MCF 10A (cell line): ENCODE measurements at regions of chr6 and their contacts with region 1.

Region 1: DNA sequence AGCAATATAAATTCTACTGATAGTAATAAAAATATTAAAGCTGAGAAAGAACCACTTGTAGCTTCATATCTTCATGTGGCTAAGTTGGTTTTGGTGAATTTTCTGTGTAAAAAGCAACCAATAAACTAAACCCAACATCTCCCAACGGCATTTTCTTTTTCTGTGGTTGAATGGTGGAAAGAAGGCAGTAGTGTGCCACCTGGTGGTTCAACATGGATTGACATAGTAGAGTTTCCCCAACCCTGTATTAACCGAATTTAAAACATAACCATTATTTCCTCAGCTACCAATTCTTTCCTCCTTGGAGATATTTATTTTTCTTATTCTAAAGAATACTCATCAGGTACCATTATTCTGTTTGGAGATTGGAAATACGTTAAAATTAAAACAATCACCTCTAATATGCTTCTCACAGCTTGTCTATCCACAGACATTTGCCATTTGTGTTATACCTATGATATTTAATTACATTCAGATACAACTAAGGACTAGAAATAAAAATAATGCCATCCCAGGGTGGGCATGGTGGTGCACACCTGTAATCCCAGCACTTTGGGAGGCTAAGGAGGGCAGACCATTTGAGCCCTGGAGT is 117.1 kb upstream of the EEF1E1 start:
- DNase-seq: peak; percentile 65
- H3K4me3 Mint-ChIP-seq: no peak overlapping the region
- H3K27ac Mint-ChIP-seq: no peak overlapping the region
- H3K4me1 Mint-ChIP-seq: no peaks in the 10 kb centered on the region
- H3K27me3 Mint-ChIP-seq: no peaks in the 10 kb centered on the region
- CTCF ChIP-seq: peak; percentile 72

Region 2: DNA sequence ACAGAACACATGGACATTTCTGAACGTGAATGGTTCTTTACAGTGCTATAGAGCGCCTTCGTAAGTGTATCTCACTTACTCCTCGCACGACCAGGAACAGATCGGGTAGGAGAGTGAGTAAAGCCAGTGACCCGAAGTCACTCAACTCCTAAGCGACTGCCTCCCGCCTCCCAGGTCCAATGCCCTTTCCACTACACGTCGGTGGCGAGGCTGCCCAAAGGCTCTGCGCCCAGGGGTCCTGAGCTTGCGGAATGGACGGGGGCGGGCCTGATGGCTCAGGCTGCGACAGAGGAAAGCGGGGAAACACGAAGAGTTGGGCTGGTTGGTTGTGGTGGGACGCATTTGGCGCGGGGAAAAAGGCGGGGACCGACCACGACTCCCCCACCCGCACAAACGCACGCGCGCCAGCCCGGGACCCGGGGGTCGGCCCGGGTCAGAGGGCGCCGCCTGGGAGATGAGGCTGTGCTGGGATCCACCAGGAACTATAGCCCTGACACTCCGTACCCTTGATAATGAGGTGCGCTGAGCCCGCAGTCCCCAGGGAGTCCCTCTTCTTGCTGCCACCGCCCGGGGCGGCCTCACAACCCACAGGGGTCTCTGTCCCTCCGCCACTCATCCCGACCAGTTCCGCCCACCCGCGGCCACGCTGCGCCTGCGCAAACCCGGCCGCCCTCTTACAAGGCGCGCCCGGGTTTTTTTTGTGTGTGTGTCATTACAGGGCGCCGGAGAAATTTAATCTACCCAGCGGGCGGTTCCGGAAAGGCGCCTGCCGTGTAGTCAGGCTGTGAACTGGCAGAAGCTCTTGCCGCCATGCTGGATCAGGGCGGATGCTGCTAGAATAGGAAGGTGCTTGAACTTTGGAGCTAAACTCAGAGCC is 155.4 kb before region 1 on chr6 and contains the start of gene BLOC1S5:
- CTCF ChIA-PET with region 1: interaction called, 4 read pairs
- POLR2A ChIA-PET with region 1: interaction called, 3 read pairs
- intact Hi-C with region 1: loop called (anchors 5 kb)
- DNase-seq: peak; percentile 96
- H3K4me3 Mint-ChIP-seq: peak within 1 kb of the TSS; percentile 86
- H3K27ac Mint-ChIP-seq: peak within 1 kb of the TSS; percentile 82
- H3K4me1 Mint-ChIP-seq: peaks cover 5% of the 10 kb centered on the region
- H3K27me3 Mint-ChIP-seq: no peaks in the 10 kb centered on the region
- CTCF ChIP-seq: no peak
- total RNA-seq, gene BLOC1S5: 7.7 and 10.9 TPM in 2 replicates

Region 3: GRCh38 chr6:8131256-8131897 is 88.1 kb before region 1 on chr6:
- CTCF ChIA-PET with region 1: interaction called, 321 read pairs
- POLR2A ChIA-PET with region 1: interaction called, 15 read pairs
- intact Hi-C with region 1: loop called (anchors 1 kb)
- DNase-seq: peak; percentile 82
- H3K4me3 Mint-ChIP-seq: no peak overlapping the region
- H3K27ac Mint-ChIP-seq: no peak overlapping the region
- H3K4me1 Mint-ChIP-seq: peaks cover 20% of the 10 kb centered on the region
- H3K27me3 Mint-ChIP-seq: no peaks in the 10 kb centered on the region
- CTCF ChIP-seq: peak; percentile 80

Region 4: DNA sequence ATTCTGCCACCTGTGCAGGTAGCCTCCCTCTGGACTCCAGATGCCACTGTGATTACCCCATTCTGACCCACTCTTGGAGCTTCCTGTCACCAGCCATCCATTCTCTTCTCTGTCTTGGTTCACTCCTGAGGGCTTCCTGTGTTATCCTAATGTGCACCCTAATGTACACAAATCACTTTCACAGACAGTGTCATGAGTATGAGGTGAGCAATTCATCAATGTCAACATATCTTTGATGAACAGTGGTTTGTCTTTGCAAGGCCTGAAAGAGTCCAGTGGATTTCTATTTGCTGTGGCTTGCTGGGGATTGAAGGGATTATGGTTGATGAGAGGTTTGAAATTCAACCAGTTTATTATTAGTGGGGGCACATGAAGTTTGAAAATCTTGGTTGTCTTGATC is 53.3 kb before region 1 on chr6:
- CTCF ChIA-PET with region 1: interaction called, 12 read pairs
- POLR2A ChIA-PET with region 1: no interaction called
- intact Hi-C with region 1: no loop called
- DNase-seq: no peak
- H3K4me3 Mint-ChIP-seq: no peak overlapping the region
- H3K27ac Mint-ChIP-seq: no peak overlapping the region
- H3K4me1 Mint-ChIP-seq: no peaks in the 10 kb centered on the region
- H3K27me3 Mint-ChIP-seq: no peaks in the 10 kb centered on the region
- CTCF ChIP-seq: no peak

Region 5: GRCh38 chr6:8201679-8202078 is 17.8 kb before region 1 on chr6:
- CTCF ChIA-PET with region 1: interaction called, 34 read pairs
- POLR2A ChIA-PET with region 1: interaction called, 3 read pairs
- intact Hi-C with region 1: no loop called
- DNase-seq: no peak
- H3K4me3 Mint-ChIP-seq: no peak overlapping the region
- H3K27ac Mint-ChIP-seq: no peak overlapping the region
- H3K4me1 Mint-ChIP-seq: no peaks in the 10 kb centered on the region
- H3K27me3 Mint-ChIP-seq: no peaks in the 10 kb centered on the region
- CTCF ChIP-seq: no peak

Region 6: DNA sequence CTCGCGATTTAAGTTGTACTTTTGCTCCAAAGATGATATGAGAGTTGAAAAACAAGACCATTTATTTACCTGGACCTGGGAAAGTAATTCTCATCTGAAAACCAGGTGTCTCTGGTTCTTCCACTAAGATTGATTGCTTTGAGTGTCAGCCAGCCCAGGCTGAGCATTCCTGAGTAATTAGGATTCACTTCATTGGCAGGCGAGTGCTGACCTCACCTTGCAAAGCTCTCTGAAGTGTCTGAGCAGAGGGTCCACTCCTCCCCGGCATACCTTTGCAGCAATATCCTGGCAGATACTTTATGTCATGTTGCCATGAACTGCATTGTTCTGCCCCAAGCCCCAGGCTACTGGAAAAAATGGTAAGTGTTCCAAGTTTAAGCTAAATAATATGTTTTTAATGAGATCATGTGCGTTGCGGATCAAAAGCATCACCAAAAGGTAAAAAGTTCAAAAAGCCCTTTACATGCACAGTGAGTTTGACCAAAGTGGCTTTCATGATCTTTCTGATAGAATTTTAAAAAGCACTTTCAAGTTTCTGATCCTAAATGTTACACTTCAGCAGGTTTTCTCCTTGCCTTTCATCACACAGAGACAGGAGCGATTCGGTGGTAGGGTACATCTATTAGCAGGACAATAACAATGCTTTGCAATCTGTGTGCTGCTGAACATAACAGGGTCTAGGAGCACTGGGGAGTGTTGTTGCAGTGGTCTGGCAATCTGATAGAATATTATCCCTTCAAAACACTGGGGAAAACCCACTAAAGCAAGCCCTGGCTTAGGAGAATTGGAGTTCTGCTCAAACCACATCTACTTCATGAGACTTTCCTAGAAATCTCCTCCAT is 10.7 kb after region 1 on chr6:
- CTCF ChIA-PET with region 1: interaction called, 16 read pairs
- POLR2A ChIA-PET with region 1: interaction called, 5 read pairs
- intact Hi-C with region 1: no loop called
- DNase-seq: peak; percentile 9
- H3K4me3 Mint-ChIP-seq: no peak overlapping the region
- H3K27ac Mint-ChIP-seq: no peak overlapping the region
- H3K4me1 Mint-ChIP-seq: no peaks in the 10 kb centered on the region
- H3K27me3 Mint-ChIP-seq: no peaks in the 10 kb centered on the region
- CTCF ChIP-seq: no peak

Region 7: DNA sequence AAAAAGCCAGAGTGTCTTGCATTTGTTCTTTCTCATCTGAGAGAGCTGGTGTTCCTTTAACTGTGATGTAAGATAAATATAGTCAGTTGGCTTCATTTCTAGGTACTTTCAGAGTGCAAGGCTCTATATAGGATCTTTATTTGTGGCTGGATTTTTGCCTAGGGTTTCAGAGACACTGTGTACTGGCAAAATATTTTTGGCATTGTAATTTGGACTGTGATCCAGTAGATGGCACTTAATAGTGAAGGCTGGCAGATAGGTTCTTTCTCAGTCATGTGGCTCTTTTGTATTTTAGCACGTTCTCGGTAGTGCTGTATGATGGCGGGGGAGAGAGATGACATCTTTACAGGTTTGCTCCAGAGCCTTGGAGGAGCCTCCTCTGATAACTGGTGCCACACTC is 242.7 kb after region 1 on chr6:
- CTCF ChIA-PET with region 1: no interaction called
- POLR2A ChIA-PET with region 1: no interaction called
- intact Hi-C with region 1: no loop called
- DNase-seq: no peak
- H3K4me3 Mint-ChIP-seq: no peak overlapping the region
- H3K27ac Mint-ChIP-seq: no peak overlapping the region
- H3K4me1 Mint-ChIP-seq: no peaks in the 10 kb centered on the region
- H3K27me3 Mint-ChIP-seq: no peaks in the 10 kb centered on the region
- CTCF ChIP-seq: no peak